ENCODE measurements at regions of chr17 and their contacts with region 1.

Region 1: DNA sequence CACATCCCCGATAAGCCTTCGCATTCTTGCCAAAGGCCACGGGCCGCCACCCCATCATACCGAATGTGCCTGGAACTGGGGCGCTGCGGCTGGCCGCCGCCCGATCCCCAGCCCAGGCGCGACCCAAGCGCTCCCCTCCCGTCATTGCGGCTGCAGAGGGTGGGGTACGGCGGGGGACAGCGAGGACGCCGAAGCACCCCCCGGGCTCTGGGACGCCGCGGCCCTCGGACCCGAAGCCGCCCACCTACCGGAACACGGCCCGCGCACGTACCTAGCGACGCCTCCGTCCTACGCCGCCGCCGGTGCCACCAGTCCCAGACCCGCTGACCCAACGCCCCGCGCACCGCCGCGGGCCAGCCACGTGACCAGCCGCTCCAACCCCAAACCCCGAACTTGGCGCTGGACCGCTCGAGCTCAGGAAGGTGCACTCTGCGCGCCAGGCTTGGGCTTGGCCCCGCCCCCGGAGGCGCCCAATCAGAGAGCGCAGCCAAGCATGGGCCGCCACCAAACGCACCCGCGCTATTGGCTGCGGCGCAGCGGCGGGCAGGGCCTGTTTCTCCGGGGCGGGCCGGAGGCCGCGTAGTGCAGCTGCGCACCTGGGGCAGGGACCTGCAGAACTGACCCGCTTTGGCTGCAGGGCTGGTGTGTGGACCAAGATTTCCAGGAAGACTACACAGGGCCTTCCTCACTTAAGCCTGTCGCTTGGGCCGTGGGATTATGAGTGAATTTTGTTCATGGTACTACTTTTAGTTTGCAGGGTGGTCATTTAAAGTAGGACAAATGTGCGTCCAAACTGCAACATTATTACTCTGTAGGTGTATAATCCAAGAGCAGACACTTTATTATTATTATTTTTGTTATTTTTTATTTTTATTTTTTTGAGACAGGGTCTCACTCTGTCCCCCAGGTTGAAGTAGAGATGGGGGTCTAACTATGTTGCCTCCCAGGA is at the start of gene SHMT1:
- DNase-seq: peak; percentile 91
- ATAC-seq: peak; percentile 100
- H3K4me3 ChIP-seq: peak within 1 kb of the TSS; percentile 47 to 89 (median 66)
- H3K4me3 Mint-ChIP-seq: peak within 1 kb of the TSS; percentile 95
- H3K27ac ChIP-seq: peak within 1 kb of the TSS in 1 of 2 donors; percentile 32
- H3K27ac Mint-ChIP-seq: peak within 1 kb of the TSS; percentile 89
- H3K4me1 ChIP-seq: peaks cover 5 to 14% of the 10 kb centered on the region in 2 donors
- H3K4me1 Mint-ChIP-seq: peaks cover 14% of the 10 kb centered on the region
- H3K27me3 ChIP-seq: no peaks in the 10 kb centered on the region
- H3K27me3 Mint-ChIP-seq: no peaks in the 10 kb centered on the region
- CTCF ChIP-seq: no peak
- total RNA-seq, gene SHMT1: 23.5 and 28.0 TPM in 2 replicates

Region 2: GRCh38 chr17:18314731-18315561 is 48.4 kb before region 1 on chr17 and contains the starts of genes SMCR8 and TOP3A:
- CTCF ChIA-PET with region 1: no interaction called
- POLR2A ChIA-PET with region 1: interaction called, 3 read pairs
- intact Hi-C with region 1: loop called (anchors 1 kb)
- DNase-seq: peak; percentile 96
- ATAC-seq: peak; percentile 93
- H3K4me3 ChIP-seq: peak within 1 kb of the TSS; percentile 74 to 98 (median 87)
- H3K4me3 Mint-ChIP-seq: peak within 1 kb of the TSS; percentile 96
- H3K27ac ChIP-seq: peak within 1 kb of the TSS; percentile 91 to 99
- H3K27ac Mint-ChIP-seq: peak within 1 kb of the TSS; percentile 98
- H3K4me1 ChIP-seq: peaks cover 43 to 59% of the 10 kb centered on the region in 2 donors
- H3K4me1 Mint-ChIP-seq: peaks cover 74% of the 10 kb centered on the region
- H3K27me3 ChIP-seq: no peaks in the 10 kb centered on the region
- H3K27me3 Mint-ChIP-seq: no peaks in the 10 kb centered on the region
- CTCF ChIP-seq: no peak
- total RNA-seq, gene SMCR8: 47.3 and 48.0 TPM in 2 replicates
- total RNA-seq, gene TOP3A: 55.8 and 61.7 TPM in 2 replicates

Region 3: GRCh38 chr17:18326039-18326438 is 37.3 kb before region 1 on chr17:
- CTCF ChIA-PET with region 1: no interaction called
- POLR2A ChIA-PET with region 1: no interaction called
- intact Hi-C with region 1: no loop called
- DNase-seq: no peak
- ATAC-seq: no peak
- H3K4me3 ChIP-seq: no peak overlapping the region
- H3K4me3 Mint-ChIP-seq: no peak overlapping the region
- H3K27ac ChIP-seq: no peak overlapping the region
- H3K27ac Mint-ChIP-seq: no peak overlapping the region
- H3K4me1 ChIP-seq: peaks cover 0 to 14% of the 10 kb centered on the region in 2 donors
- H3K4me1 Mint-ChIP-seq: peaks cover 27% of the 10 kb centered on the region
- H3K27me3 ChIP-seq: no peaks in the 10 kb centered on the region
- H3K27me3 Mint-ChIP-seq: no peaks in the 10 kb centered on the region
- CTCF ChIP-seq: no peak